ENCODE measurements at regions of chr5 and their contacts with region 1.

Region 1: GRCh38 chr5:131647048-131647769 is 12.2 kb upstream of the RAPGEF6 start:
- DNase-seq: no peak
- ATAC-seq: peak; percentile 62; the same call in 1 of the 3 replicates
- H3K4me3 ChIP-seq: no peak overlapping the region
- H3K27ac ChIP-seq: no peak overlapping the region
- H3K4me1 ChIP-seq: no peaks in the 10 kb centered on the region
- H3K27me3 ChIP-seq: no peaks in the 10 kb centered on the region
- CTCF ChIP-seq: no peak
- EP300 ChIP-seq: no peak
- POLR2A ChIP-seq: no peak
- RAD21 ChIP-seq: no peak

Region 2: GRCh38 chr5:131661931-131662330 is 14.7 kb after region 1 on chr5:
- CTCF ChIA-PET with region 1: no interaction called
- POLR2A ChIA-PET with region 1: interaction called, 10 read pairs
- in situ Hi-C with region 1: no loop called
- intact Hi-C with region 1: no loop called
- DNase-seq: no peak
- ATAC-seq: no peak
- H3K4me3 ChIP-seq: no peak overlapping the region
- H3K27ac ChIP-seq: no peak overlapping the region
- H3K4me1 ChIP-seq: peaks cover 0 to 2% of the 10 kb centered on the region in 2 experiments; a peak in 1 of 5 replicates
- H3K27me3 ChIP-seq: no peaks in the 10 kb centered on the region
- CTCF ChIP-seq: no peak
- EP300 ChIP-seq: no peak
- POLR2A ChIP-seq: no peak
- RAD21 ChIP-seq: no peak

Region 3: GRCh38 chr5:132227485-132228240 is 580.5 kb after region 1 on chr5 and contains the start of gene P4HA2:
- CTCF ChIA-PET with region 1: no interaction called
- POLR2A ChIA-PET with region 1: no interaction called
- in situ Hi-C with region 1: no loop called
- intact Hi-C with region 1: no loop called
- DNase-seq: peak; percentile 91 to 96 (median 93)
- ATAC-seq: peak; percentile 98
- H3K4me3 ChIP-seq: peak within 1 kb of the TSS; percentile 76
- H3K27ac ChIP-seq: peak within 1 kb of the TSS; percentile 83
- H3K4me1 ChIP-seq: peaks cover 30 to 34% of the 10 kb centered on the region in 2 experiments
- H3K27me3 ChIP-seq: no peaks in the 10 kb centered on the region
- CTCF ChIP-seq: peak in 2 of 3 experiments; percentile 9 to 15; a peak in 2 of 6 replicates
- EP300 ChIP-seq: no peak
- POLR2A ChIP-seq: peak; percentile 71
- RAD21 ChIP-seq: no peak
- polyA plus RNA-seq, gene P4HA2: 17.9 to 29.2 TPM